Common myeloid progenitor, CD34-positive (primary cell): ENCODE measurements at regions of chr11 and their contacts with region 1.

Region 1: GRCh38 chr11:33857933-33858371 is 33.9 kb downstream of the LMO2 start:
- DNase-seq: peak; percentile 85 to 91 (median 87)
- H3K4me3 ChIP-seq: no peak overlapping the region
- H3K27ac ChIP-seq: no peak overlapping the region
- H3K4me1 ChIP-seq: peaks cover 0 to 39% (median 13%) of the 10 kb centered on the region in 4 experiments
- H3K27me3 ChIP-seq: no peaks in the 10 kb centered on the region

Region 2: DNA sequence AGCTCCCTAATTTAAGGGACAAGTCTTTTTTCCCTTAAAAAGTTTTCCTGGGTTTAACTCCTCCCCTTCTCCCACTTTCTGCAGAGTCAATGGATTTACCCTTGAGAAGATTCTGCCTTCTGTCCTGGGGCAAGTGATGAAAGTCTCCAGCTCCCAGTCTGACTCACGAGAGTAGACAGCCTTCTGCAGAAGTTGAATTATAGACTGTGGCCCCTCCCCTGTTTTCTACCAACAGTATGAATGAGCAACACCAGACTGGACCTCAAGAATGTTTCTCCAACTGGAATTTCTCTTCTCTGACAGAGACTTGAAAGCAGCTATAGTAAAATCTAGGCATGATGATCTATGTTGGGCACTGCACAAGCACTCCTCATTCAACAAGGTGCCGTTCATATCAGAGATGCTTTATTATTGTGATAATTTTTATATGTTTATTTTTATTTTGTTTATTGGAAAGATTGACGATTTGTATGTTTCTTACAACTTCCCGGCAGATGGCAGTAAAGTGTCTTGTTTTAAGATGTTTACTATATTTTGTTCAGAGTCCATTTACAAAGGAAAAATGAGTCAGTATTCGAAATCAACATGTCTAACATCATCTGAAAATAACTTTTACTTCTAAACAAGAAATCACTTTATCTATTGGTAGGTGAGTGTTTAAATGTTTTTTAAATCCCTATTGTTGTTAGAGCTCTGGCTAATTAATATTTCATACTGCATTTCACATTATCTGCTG is 22.6 kb before region 1 on chr11:
- CTCF ChIA-PET with region 1: interaction called, 14 read pairs
- POLR2A ChIA-PET with region 1: no interaction called
- DNase-seq: peak; percentile 36 to 75 (median 69)
- H3K4me3 ChIP-seq: no peak overlapping the region
- H3K27ac ChIP-seq: no peak overlapping the region
- H3K4me1 ChIP-seq: no peaks in the 10 kb centered on the region
- H3K27me3 ChIP-seq: peaks cover 0 to 2% (median 0%) of the 10 kb centered on the region in 5 experiments

Region 3: GRCh38 chr11:33869481-33870422 is 11.8 kb after region 1 on chr11:
- CTCF ChIA-PET with region 1: interaction called, 45 read pairs
- POLR2A ChIA-PET with region 1: no interaction called
- DNase-seq: peak; percentile 67 to 88 (median 88)
- H3K4me3 ChIP-seq: peak overlapping the region; percentile 66 to 94 (median 89)
- H3K27ac ChIP-seq: peak overlapping the region; percentile 72 to 91
- H3K4me1 ChIP-seq: peaks cover 37 to 78% (median 65%) of the 10 kb centered on the region in 4 experiments
- H3K27me3 ChIP-seq: no peaks in the 10 kb centered on the region

Region 4: DNA sequence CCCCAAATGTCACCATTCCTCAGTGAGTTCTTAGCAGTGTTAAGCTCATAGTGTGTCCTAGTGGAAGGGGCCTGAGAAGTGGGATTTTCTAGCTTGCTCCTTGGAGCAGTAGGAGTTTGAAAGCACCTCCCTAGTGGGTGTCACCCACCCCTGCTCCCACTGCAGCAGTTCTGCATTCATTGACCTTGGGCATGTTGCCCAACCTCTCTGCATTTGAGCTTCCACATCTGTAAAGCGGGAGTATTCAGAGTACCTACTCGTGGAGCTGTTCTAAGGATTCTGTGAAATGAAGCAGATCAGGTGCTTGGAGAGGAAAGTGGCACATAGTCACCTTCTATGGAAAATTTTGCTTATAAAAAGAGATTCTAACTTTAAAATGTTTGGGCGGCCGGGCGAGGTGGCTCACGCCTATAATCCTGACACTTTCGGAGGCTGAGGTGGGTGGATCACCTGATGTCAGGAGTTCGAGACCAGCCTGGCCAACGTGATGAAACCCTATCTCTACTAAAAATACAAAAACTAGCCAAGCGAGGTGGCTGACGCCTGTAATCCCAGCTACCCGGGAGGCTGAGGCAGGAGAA is 17.0 kb after region 1 on chr11:
- CTCF ChIA-PET with region 1: interaction called, 45 read pairs
- POLR2A ChIA-PET with region 1: no interaction called
- DNase-seq: no peak
- H3K4me3 ChIP-seq: peak overlapping the region in 2 of 7 experiments; percentile 50 to 52
- H3K27ac ChIP-seq: peak overlapping the region in 1 of 2 experiments; percentile 91
- H3K4me1 ChIP-seq: peaks cover 29 to 91% (median 68%) of the 10 kb centered on the region in 4 experiments
- H3K27me3 ChIP-seq: no peaks in the 10 kb centered on the region

Region 5: GRCh38 chr11:33881651-33882503 is 23.9 kb after region 1 on chr11:
- CTCF ChIA-PET with region 1: interaction called, 11 read pairs
- POLR2A ChIA-PET with region 1: no interaction called
- DNase-seq: peak in 2 of 3 donors; percentile 44 to 60
- H3K4me3 ChIP-seq: peak overlapping the region in 6 of 7 experiments; percentile 46 to 90 (median 59)
- H3K27ac ChIP-seq: peak overlapping the region; percentile 80 to 91
- H3K4me1 ChIP-seq: peaks cover 31 to 93% (median 75%) of the 10 kb centered on the region in 4 experiments
- H3K27me3 ChIP-seq: no peaks in the 10 kb centered on the region

Region 6: DNA sequence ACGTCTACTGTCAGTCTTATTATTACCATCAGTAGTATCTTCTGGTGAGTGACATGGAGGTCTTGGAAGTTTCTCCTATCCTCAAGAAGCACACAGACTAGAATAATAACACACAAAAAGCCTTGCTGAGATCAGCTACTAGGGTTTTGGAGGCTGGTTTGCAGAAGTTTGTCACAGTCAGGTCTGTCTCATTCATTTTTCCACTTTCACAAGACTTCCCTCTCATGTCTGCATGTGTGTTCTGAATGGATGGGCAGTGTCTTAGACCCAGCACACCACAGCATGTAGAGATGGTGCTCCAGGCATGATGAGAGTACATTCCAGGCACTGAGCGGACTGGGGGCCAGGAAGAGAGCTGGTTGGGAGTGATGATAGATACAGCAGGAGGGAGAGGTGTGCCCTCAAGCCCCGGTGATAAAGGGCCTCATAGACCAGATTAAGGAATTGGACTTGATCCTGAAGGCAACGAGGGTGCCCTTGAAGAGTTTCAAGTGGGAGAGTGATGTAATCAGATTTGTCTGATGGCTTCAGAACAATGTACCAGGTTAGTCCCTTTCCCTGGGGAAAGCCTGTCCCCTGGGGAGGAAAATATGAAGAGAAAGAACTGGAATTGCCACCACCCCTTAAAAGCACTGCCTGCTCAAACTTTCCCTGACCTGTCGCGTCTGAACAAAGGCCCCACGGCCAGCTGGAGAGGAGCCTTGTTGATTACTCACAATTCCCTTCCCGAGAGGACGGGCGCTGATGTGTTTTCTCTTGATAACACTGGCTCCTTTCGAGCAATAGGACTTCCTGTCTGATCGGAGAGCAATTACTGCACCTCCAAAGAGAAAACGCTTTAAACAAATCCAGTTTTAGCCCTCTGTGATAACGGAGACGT is 79.0 kb after region 1 on chr11:
- CTCF ChIA-PET with region 1: interaction called, 11 read pairs
- POLR2A ChIA-PET with region 1: no interaction called
- DNase-seq: peak in 2 of 3 donors; percentile 56 to 68
- H3K4me3 ChIP-seq: peak overlapping the region in 3 of 7 experiments; percentile 5 to 27 (median 6)
- H3K27ac ChIP-seq: peak overlapping the region in 1 of 2 experiments; percentile 63
- H3K4me1 ChIP-seq: peaks cover 12 to 66% (median 58%) of the 10 kb centered on the region in 4 experiments
- H3K27me3 ChIP-seq: no peaks in the 10 kb centered on the region